Lower leg skin (tissue), 4 donors: ENCODE measurements at regions of chr4 and their contacts with region 1.

Region 1: DNA sequence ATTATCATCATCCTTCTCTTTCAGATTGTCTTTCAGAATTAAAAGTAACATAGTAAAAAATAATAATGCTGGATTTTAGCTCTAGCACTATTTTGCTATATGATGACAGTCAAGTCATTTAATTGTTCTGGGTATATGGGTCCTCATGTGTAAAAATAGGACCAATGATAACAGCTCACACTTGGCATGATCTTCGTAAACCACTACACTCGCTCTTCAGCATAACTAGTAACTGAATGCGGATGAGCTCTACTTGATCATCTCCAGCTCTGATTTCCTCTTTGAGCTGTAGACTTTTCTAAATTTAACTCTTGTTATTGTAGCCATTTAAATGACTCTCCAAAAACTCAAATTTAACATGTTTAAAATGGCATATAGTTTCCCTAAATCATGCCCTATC is 831.8 kb upstream of the HS3ST1 start:
- DNase-seq: no peak
- H3K4me3 ChIP-seq: no peak overlapping the region
- CTCF ChIP-seq: no peak
- POLR2A ChIP-seq: no peak

Region 2: GRCh38 chr4:12231098-12231497 is 29.4 kb before region 1 on chr4:
- intact Hi-C with region 1: loop called (anchors 2 kb)
- DNase-seq: no peak
- H3K4me3 ChIP-seq: no peak overlapping the region
- CTCF ChIP-seq: no peak
- POLR2A ChIP-seq: no peak

Region 3: DNA sequence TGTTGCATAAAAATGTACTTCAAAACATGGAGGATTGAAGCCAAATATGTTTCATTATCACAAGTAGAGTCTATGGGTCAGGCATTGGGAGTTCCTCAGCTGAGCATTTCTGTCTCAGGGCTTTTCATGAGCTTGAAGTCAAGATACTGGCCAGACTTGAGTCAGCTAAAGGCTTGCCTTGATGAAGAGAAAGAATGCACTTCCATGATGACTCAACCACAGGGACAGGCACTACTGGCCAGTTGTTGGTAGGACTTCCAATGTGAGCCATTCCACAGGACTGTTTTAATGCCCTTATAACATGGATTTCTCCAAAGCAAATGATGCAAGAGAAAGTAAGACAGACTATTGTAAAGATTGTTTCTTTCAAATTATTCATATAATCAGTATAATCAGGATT is 328.1 kb after region 1 on chr4:
- intact Hi-C with region 1: no loop called
- DNase-seq: no peak
- H3K4me3 ChIP-seq: no peak overlapping the region
- CTCF ChIP-seq: no peak
- POLR2A ChIP-seq: no peak